ENCODE measurements at regions of chr11 and their contacts with region 1.

Region 1: DNA sequence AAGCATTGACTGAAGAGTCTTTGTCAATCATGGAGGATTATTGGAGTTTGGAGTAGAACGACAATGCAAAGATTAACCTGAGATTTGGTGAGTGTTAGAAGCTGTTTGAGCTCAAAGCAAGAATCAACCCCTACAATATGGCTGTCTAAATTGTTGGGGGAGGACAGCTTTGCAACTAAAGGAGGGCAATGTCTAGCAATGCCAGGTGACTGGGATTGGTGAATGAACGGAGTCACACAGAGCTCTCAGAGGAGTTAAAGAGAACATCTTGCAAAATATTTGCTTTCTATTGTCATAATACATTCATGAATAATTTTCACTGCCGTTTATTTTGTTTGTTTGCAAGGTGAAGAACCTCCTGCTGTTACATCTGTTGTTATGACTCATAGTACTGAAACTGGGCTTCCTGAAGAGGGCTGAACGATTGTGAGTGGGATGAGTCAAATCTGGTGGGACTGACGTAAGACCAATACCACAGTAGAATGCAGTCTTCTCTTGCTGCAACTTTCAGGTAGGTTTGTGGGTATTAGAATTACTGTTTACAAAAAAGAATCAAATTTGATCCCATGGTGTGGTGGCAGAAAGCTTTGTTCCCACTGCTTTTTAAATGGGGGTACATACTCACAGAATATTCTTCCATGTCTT is 281.9 kb downstream of the CADM1 start:
- DNase-seq: no peak
- ATAC-seq: peak; percentile 89
- H3K4me3 Mint-ChIP-seq: no peak overlapping the region
- H3K27ac Mint-ChIP-seq: peak overlapping the region; percentile 61
- H3K4me1 Mint-ChIP-seq: peaks cover 17% of the 10 kb centered on the region
- H3K27me3 Mint-ChIP-seq: no peaks in the 10 kb centered on the region
- CTCF ChIP-seq: no peak

Region 2: GRCh38 chr11:115201111-115201792 is 21.1 kb before region 1 on chr11:
- CTCF ChIA-PET with region 1: no interaction called
- POLR2A ChIA-PET with region 1: no interaction called
- intact Hi-C with region 1: no loop called
- DNase-seq: no peak
- ATAC-seq: no peak
- H3K4me3 Mint-ChIP-seq: no peak overlapping the region
- H3K27ac Mint-ChIP-seq: no peak overlapping the region
- H3K4me1 Mint-ChIP-seq: no peaks in the 10 kb centered on the region
- H3K27me3 Mint-ChIP-seq: no peaks in the 10 kb centered on the region
- CTCF ChIP-seq: no peak

Region 3: GRCh38 chr11:115423728-115424459 is 201.6 kb after region 1 on chr11:
- CTCF ChIA-PET with region 1: no interaction called
- POLR2A ChIA-PET with region 1: no interaction called
- intact Hi-C with region 1: no loop called
- DNase-seq: no peak
- ATAC-seq: no peak
- H3K4me3 Mint-ChIP-seq: no peak overlapping the region
- H3K27ac Mint-ChIP-seq: no peak overlapping the region
- H3K4me1 Mint-ChIP-seq: no peaks in the 10 kb centered on the region
- H3K27me3 Mint-ChIP-seq: no peaks in the 10 kb centered on the region
- CTCF ChIP-seq: no peak

Region 4: GRCh38 chr11:115924744-115925567 is 702.6 kb after region 1 on chr11:
- CTCF ChIA-PET with region 1: no interaction called
- POLR2A ChIA-PET with region 1: no interaction called
- intact Hi-C with region 1: loop called (anchors 5 kb)
- DNase-seq: no peak
- ATAC-seq: peak; percentile 91
- H3K4me3 Mint-ChIP-seq: no peak overlapping the region
- H3K27ac Mint-ChIP-seq: peak overlapping the region; percentile 46
- H3K4me1 Mint-ChIP-seq: peaks cover 46% of the 10 kb centered on the region
- H3K27me3 Mint-ChIP-seq: no peaks in the 10 kb centered on the region
- CTCF ChIP-seq: no peak